Esophagus muscularis mucosa (tissue), 4 donors: ENCODE measurements at regions of chr22 and their contacts with region 1.

Region 1: DNA sequence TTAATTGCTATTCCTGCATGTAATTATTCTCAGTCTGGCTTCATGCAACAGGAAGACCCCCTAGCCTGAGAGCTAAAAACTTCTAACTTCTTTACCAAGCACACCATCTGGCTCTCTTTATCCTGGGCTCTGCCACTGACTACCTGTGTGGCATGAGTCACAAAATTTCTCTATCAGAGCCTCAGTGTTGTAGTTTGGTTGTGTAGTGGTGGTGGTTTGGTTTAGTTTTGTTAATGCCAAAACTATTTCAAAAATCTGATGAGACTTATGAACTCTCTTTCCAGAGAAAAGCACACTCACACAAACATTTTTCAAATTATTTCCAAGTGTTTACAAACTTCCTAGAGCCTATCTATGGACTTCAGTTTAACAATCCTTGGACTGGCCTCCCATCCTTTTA is 7.5 kb upstream of the IL17RA start:
- DNase-seq: no peak
- H3K4me3 ChIP-seq: no peak overlapping the region
- H3K27ac ChIP-seq: no peak overlapping the region
- H3K4me1 ChIP-seq: peaks cover 0 to 5% (median 2%) of the 10 kb centered on the region in 4 donors
- H3K27me3 ChIP-seq: peaks cover 0 to 19% (median 0%) of the 10 kb centered on the region in 4 donors
- CTCF ChIP-seq: no peak
- EP300 ChIP-seq: no peak
- POLR2A ChIP-seq: no peak

Region 2: GRCh38 chr22:17171313-17172171 is 94.3 kb after region 1 on chr22:
- intact Hi-C with region 1: loop called (anchors 5 kb)
- DNase-seq: peak; percentile 95
- H3K4me3 ChIP-seq: peak overlapping the region; percentile 73 to 85 (median 80)
- H3K27ac ChIP-seq: peak overlapping the region; percentile 92 to 97 (median 96)
- H3K4me1 ChIP-seq: peaks cover 10 to 28% (median 23%) of the 10 kb centered on the region in 4 donors
- H3K27me3 ChIP-seq: no peaks in the 10 kb centered on the region
- CTCF ChIP-seq: peak; percentile 62 to 88 (median 71)
- EP300 ChIP-seq: no peak
- POLR2A ChIP-seq: no peak